ENCODE measurements at regions of chr2 and their contacts with region 1.

Region 1: GRCh38 chr2:54704688-54705605 is 18.5 kb upstream of the EML6 start:
- H3K4me3 ChIP-seq: no peak overlapping the region
- H3K27ac ChIP-seq: no peak overlapping the region
- H3K4me1 ChIP-seq: no peaks in the 10 kb centered on the region
- CTCF ChIP-seq: peak; percentile 47; the same call in 1 of the 2 replicates

Region 2: DNA sequence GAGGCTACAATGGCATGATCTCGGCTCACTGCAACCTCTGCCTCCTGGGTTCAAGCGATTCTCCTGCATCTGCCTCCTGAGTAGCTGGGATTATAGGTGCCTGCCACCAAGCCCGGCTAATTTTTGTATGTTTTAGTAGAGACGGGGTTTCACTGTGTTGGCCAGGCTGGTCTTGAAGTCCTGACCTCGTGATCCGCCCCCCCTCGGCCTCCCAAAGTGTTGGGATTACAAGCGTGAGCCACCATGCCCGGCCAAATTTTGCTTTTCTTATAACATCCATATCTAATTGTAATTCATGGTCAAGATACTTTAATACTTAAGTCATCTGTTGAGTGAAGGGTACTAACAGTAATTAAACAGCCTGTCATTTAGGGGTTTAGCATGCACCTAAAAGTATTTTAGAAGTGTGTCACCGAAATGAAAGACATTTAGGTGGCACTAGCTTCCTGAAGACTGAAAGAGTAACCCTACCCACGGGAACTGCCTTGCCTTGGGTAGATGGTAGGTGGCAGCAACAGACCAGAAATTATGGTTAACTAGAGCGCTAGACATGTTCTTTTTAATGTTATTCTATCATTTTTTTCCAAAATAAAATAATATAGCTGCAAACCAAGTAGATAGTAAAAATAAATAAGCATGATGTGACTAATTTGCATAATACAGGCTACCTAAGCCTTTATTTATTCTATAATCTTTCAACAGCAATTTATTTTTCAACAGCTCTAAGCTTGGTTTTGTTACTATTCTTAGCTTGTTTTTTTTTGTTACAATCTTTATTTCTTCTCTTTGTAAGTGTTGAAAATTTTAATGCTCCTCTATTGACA is 598.1 kb before region 1 on chr2:
- CTCF ChIA-PET with region 1: interaction called, 36 read pairs
- POLR2A ChIA-PET with region 1: no interaction called
- H3K4me3 ChIP-seq: no peak overlapping the region
- H3K27ac ChIP-seq: no peak overlapping the region
- H3K4me1 ChIP-seq: no peaks in the 10 kb centered on the region
- CTCF ChIP-seq: 0 out of 2 replicates have a peak, but pooled peaks have one; percentile 33

Region 3: GRCh38 chr2:54510916-54511315 is 194.0 kb before region 1 on chr2:
- CTCF ChIA-PET with region 1: no interaction called
- POLR2A ChIA-PET with region 1: no interaction called
- H3K4me3 ChIP-seq: no peak overlapping the region
- H3K27ac ChIP-seq: no peak overlapping the region
- H3K4me1 ChIP-seq: no peaks in the 10 kb centered on the region
- CTCF ChIP-seq: no peak

Region 4: DNA sequence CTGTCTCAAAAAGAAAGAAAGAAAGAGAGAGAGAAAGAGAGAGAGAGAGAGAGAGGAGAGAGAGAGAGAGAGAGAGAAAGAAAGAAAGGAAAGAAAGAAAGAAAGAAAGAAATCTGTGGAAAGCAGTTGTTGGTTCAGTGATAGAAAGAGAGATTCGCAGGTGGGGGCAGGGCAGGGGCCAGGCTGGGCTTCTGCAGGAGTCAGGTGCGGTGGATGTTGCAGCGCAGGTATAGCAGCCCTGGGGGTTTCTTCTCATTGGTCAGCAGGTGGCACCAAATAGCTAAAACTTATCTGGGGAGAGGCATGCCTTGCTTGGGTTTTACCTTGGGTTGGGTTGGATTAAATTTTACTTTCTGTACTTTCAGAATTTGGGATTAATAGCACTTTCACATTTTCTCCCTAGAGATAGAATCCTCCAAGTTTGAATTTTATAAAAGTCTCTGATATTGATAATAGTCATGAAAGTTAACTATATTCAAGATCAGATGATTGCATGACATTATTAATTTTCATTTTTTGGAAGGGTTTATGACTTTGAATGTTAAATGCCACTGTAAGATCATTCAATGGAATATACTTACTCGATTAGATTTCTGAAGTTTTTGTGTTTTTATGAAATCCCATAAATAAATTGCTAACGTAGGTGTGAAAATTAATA is 182.2 kb before region 1 on chr2:
- CTCF ChIA-PET with region 1: interaction called, 51 read pairs
- POLR2A ChIA-PET with region 1: no interaction called
- H3K4me3 ChIP-seq: no peak overlapping the region
- H3K27ac ChIP-seq: no peak overlapping the region
- H3K4me1 ChIP-seq: 0 out of 2 replicates have a peak, but pooled peaks cover 3% of the 10 kb centered on the region
- CTCF ChIP-seq: peak; percentile 71; the same call in 1 of the 2 replicates

Region 5: GRCh38 chr2:54680397-54681041 is 24.4 kb before region 1 on chr2:
- CTCF ChIA-PET with region 1: interaction called, 12 read pairs
- POLR2A ChIA-PET with region 1: interaction called, 3 read pairs
- H3K4me3 ChIP-seq: no peak overlapping the region
- H3K27ac ChIP-seq: no peak overlapping the region
- H3K4me1 ChIP-seq: no peaks in the 10 kb centered on the region
- CTCF ChIP-seq: no peak

Region 6: GRCh38 chr2:54716375-54716774 is 11.4 kb after region 1 on chr2:
- CTCF ChIA-PET with region 1: interaction called, 18 read pairs
- POLR2A ChIA-PET with region 1: no interaction called
- H3K4me3 ChIP-seq: no peak overlapping the region
- H3K27ac ChIP-seq: no peak overlapping the region
- H3K4me1 ChIP-seq: no peaks in the 10 kb centered on the region
- CTCF ChIP-seq: no peak

Region 7: DNA sequence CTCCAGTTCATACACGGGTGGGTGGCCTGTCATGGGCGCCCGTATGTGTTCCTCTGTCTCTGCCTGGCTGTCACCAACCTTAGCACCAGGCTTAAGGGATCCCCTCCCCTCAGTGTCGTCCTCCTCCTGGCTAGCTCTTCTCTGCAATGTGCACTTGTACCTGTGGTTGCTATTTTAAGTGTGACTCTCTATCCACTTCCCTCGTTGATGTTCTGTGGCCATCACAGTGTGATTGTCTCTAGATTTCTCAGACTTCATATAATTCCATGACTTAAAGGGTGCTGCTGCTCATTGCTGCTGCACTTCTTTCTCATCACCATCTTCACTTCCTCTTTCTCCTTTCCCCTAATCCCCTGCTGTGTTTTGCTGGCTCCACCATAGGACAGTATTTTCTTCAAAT is 161.9 kb after region 1 on chr2:
- CTCF ChIA-PET with region 1: no interaction called
- POLR2A ChIA-PET with region 1: no interaction called
- H3K4me3 ChIP-seq: no peak overlapping the region
- H3K27ac ChIP-seq: no peak overlapping the region
- H3K4me1 ChIP-seq: no peaks in the 10 kb centered on the region
- CTCF ChIP-seq: no peak

Measured in HEK293 (cell line).